ENCODE measurements at regions of chr7 and their contacts with region 1.

Region 1: DNA sequence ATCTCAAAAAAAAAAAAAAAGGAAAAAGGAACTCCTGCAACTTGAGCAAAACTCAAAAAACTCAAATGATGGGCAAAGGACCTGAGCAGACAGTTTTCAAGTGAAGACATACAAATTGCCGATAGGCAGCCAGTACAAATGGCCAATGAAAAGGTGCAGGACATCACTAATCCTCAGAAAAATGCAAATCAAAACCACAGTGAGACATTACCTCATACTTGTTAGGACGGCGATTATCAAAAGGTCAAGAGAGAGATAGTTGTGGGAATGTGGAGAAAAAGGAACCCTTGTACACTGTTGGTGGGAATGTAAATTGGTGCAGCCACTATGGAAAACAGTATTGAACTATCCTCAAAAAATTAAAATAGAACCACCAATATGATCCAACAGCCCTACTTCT is 16.8 kb downstream of the SVOPL start:
- DNase-seq: no peak
- ATAC-seq: no peak
- H3K4me3 ChIP-seq: no peak overlapping the region
- H3K27ac ChIP-seq: no peak overlapping the region
- H3K4me1 ChIP-seq: no peaks in the 10 kb centered on the region
- H3K27me3 ChIP-seq: peaks cover 19 to 33% of the 10 kb centered on the region in 2 experiments
- CTCF ChIP-seq: no peak
- EP300 ChIP-seq: no peak
- POLR2A ChIP-seq: no peak
- RAD21 ChIP-seq: no peak

Region 2: DNA sequence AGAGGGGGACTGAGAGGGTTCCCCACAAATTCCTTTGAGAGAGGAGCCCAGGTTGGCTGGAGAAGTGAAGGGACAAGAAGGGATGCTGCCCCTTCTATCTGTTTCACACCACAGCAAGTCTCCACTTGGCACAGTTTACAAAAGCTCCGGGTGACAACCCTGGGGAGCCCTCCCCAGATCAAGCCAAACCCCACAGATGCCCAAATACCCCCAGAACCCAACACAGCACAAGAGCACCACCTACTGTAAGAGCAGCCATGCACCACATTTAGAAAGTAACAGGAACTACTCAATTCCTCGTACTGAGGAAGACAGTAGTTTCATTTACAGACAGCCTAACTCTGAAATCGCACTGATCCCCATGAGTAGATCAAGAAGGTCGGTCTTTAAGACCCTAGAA is 181.5 kb after region 1 on chr7:
- CTCF ChIA-PET with region 1: no interaction called
- POLR2A ChIA-PET with region 1: no interaction called
- in situ Hi-C with region 1: no loop called
- intact Hi-C with region 1: loop called (anchors 10 kb)
- DNase-seq: peak; percentile 40 to 59 (median 43)
- ATAC-seq: peak; percentile 77
- H3K4me3 ChIP-seq: no peak overlapping the region
- H3K27ac ChIP-seq: no peak overlapping the region
- H3K4me1 ChIP-seq: peaks cover 3 to 14% of the 10 kb centered on the region in 2 experiments; a peak in 4 of 5 replicates
- H3K27me3 ChIP-seq: peaks cover 42 to 70% of the 10 kb centered on the region in 2 experiments
- CTCF ChIP-seq: peak; percentile 74 to 89 (median 75)
- EP300 ChIP-seq: no peak
- POLR2A ChIP-seq: no peak
- RAD21 ChIP-seq: peak; percentile 71 to 82

Measured in K562 (cell line).